ENCODE measurements at regions of chr7 and their contacts with region 1.

Region 1: GRCh38 chr7:22911889-22912288 is 89.2 kb upstream of the TOMM7 start:
- DNase-seq: no peak
- ATAC-seq: no peak
- H3K4me3 ChIP-seq: no peak overlapping the region
- H3K27ac ChIP-seq: no peak overlapping the region
- H3K4me1 ChIP-seq: peaks cover 27% of the 10 kb centered on the region
- H3K27me3 ChIP-seq: no peaks in the 10 kb centered on the region
- CTCF ChIP-seq: no peak

Region 2: DNA sequence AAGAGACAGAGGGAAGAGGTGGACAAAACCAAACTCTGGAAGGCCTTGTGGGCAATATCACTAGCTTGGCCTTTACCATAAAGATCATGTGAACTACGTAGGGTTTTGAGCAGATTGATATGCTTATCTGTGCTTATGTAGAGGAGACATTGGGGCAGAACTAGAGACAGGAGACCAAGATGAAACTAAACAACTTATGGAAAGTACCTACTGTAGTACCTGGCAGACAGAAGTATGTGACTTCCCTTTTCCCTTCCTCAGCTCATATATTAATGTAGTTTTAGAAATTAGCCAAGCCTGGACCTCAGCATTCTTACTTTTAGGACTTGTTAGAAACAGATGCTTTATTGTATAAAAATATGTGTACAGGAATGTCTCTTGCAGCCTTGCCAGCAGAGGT is 198.9 kb before region 1 on chr7:
- intact Hi-C with region 1: no loop called
- DNase-seq: no peak
- ATAC-seq: no peak
- H3K4me3 ChIP-seq: no peak overlapping the region
- H3K27ac ChIP-seq: no peak overlapping the region
- H3K4me1 ChIP-seq: peaks cover 8% of the 10 kb centered on the region
- H3K27me3 ChIP-seq: no peaks in the 10 kb centered on the region
- CTCF ChIP-seq: no peak

Region 3: DNA sequence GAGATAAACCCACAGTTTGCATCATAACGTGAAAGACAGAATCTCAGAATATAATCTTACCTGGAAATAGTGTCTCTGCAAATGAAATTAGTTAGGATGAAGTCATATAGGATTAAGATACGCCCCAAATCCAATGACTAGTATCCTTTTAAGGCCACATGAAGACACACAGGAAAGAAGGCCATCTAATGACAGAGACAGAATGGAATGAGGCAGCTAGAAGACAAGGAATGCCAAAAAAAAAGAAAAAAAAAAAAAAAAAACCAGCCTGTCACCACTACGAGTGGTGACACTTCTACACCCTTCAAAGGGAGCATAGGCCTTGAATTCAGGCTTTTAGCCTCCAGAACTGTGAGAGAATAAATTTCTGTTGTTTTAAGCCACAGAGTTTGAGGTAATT is 19.1 kb after region 1 on chr7:
- intact Hi-C with region 1: loop called in 1 of 2 experiments (anchors 2 kb)
- DNase-seq: no peak
- ATAC-seq: no peak
- H3K4me3 ChIP-seq: no peak overlapping the region
- H3K27ac ChIP-seq: no peak overlapping the region
- H3K4me1 ChIP-seq: peaks cover 9% of the 10 kb centered on the region
- H3K27me3 ChIP-seq: no peaks in the 10 kb centered on the region
- CTCF ChIP-seq: no peak